ENCODE measurements at regions of chr19 and their contacts with region 1.

Region 1: GRCh38 chr19:42219812-42220750 is at the start of gene ZNF526:
- DNase-seq: peak; percentile 98
- H3K4me3 Mint-ChIP-seq: peak within 1 kb of the TSS; percentile 93
- H3K27ac Mint-ChIP-seq: peak within 1 kb of the TSS; percentile 88
- H3K4me1 Mint-ChIP-seq: peaks cover 63% of the 10 kb centered on the region
- H3K27me3 Mint-ChIP-seq: no peaks in the 10 kb centered on the region
- total RNA-seq, gene ZNF526: 21.5 to 21.7 TPM

Region 2: DNA sequence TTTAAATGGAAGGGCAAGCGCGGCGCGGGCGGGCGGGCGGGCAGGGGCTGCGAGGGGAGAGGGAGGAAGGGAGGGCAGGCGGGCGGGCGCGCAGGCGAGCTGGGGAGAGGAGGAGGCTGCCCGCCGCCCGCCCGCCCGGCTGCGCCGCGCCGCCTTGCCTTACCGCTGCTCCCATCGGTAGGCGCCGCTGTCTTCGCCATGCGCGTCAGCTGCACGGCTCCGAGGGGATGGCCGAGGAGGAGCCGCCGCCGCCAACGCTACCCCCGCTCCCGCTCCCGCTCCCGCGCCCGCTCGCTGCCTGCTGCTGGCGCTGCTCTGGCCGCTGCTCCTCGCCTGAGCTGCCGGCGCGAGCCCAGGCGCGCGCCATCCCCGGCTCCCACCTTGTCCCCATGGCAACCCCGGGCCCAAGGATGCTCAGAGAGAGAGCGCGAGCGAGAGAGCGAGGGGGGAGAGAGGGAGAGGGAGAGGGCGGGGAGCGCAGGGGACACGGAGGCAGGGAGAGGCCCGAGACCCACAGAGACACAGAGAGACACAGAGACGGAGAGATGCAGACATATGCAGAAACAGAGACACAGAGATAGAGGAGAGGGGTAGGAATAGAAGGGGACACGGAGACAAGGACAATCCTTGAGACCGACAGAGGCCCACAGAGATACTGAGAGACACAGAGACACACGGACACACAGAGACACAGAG is 42.9 kb before region 1 on chr19:
- CTCF ChIA-PET with region 1: no interaction called
- POLR2A ChIA-PET with region 1: interaction called, 12 read pairs
- DNase-seq: peak; percentile 81
- H3K4me3 Mint-ChIP-seq: no peak overlapping the region
- H3K27ac Mint-ChIP-seq: no peak overlapping the region
- H3K4me1 Mint-ChIP-seq: peaks cover 19% of the 10 kb centered on the region
- H3K27me3 Mint-ChIP-seq: peaks cover 30% of the 10 kb centered on the region

Region 3: DNA sequence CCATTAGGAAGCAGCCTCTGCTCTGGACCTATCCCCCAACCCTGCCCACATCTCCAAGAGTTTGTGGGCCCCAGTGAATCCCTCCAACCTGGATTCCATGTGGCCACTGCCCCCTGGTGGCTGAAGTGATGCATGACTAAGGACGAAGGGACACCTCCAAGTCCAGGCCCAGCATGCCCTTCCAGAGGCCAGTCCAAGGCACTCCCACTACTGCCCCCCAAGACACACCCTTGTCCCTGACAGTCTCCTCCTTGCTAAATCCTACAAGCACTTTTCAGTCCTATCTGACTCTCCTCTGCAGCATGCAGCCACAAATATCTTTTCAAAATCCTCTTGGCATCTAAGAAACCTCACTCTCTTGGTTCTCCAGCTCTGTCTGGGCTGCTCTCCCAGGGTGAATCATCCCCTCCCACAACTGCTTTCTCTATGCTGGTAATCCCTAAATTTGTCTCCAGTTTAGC is 35.6 kb before region 1 on chr19:
- CTCF ChIA-PET with region 1: interaction called, 14 read pairs
- POLR2A ChIA-PET with region 1: interaction called, 5 read pairs
- DNase-seq: peak; percentile 72
- H3K4me3 Mint-ChIP-seq: peak overlapping the region; percentile 7
- H3K27ac Mint-ChIP-seq: peak overlapping the region; percentile 89
- H3K4me1 Mint-ChIP-seq: peaks cover 57% of the 10 kb centered on the region
- H3K27me3 Mint-ChIP-seq: no peaks in the 10 kb centered on the region

Region 4: GRCh38 chr19:42199440-42200115 is 20.5 kb before region 1 on chr19:
- CTCF ChIA-PET with region 1: interaction called, 19 read pairs
- POLR2A ChIA-PET with region 1: interaction called, 68 read pairs
- DNase-seq: peak; percentile 91
- H3K4me3 Mint-ChIP-seq: peak overlapping the region; percentile 72
- H3K27ac Mint-ChIP-seq: peak overlapping the region; percentile 98
- H3K4me1 Mint-ChIP-seq: peaks cover 86% of the 10 kb centered on the region
- H3K27me3 Mint-ChIP-seq: no peaks in the 10 kb centered on the region

Region 5: DNA sequence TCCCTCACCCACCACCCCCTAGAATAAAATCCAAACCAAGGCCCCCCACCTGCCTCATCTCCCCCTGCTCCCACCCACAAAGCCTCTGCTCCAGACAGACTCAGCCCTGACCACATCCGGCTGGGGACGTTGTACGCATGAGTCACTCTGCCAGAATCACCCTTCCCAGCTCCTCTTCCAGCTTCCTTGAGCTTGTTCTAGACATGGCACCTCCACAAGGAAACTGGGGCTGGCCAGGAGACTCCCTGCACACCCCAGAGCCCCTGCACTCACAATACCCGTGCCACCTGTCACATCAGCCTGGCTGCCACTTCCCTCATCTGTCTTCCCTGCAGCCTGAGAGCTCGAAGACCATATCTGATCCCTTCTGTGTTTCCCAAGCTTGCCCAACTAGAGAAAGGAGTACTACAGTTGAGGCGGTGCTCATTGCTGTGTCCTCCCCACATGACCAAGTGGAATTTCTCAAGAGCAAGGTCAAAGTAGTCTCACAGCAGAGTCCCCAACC is 12.3 kb before region 1 on chr19:
- CTCF ChIA-PET with region 1: interaction called, 3 read pairs
- POLR2A ChIA-PET with region 1: interaction called, 68 read pairs
- DNase-seq: no peak
- H3K4me3 Mint-ChIP-seq: no peak overlapping the region
- H3K27ac Mint-ChIP-seq: peak overlapping the region; percentile 73
- H3K4me1 Mint-ChIP-seq: peaks cover 71% of the 10 kb centered on the region
- H3K27me3 Mint-ChIP-seq: no peaks in the 10 kb centered on the region

Measured in activated CD4-positive, alpha-beta memory T cell treated with anti-CD3 and anti-CD28 coated beads, Interleukin-2, amount 10 ng/mL, durations not matched to agents 7 days and 5 days (primary cell).